ENCODE measurements at regions of chr6 and their contacts with region 1.

Region 1: DNA sequence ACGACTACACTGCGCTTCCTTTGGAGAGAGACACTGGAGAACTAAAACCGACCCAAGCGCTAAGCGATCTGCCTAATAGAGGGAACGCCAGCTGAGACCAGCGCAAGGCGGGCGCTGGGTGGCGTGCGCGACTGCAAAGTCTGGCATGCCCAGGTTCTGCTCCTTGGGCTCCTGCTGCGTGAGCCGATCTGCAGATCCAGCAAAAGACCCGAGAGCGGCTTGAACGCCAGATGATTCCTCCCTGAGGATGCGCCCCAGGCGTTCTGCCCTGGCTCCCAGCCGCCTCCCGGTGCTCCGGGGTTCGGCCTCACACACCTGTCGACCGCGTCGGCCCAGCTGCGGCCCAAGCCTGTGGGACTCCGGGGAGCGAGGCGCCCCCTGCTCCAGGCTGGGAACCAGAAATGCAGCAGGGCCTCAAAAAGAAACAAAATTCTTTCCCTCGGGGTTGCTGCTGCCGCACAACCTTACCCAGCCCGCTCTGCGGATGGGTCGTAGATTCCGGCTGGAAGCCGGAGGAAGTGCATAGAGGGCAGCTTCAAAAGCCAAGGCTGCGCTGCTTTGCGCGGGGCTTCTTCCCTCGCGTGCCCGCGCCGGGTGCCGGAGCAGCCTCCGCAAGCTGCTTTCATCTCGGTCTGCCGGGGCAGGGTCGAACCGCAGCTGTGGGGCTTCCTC is 17.9 kb upstream of the PRDM13 start:
- DNase-seq: peak; percentile 89
- H3K4me3 Mint-ChIP-seq: peak overlapping the region; percentile 88
- H3K27ac Mint-ChIP-seq: peak overlapping the region; percentile 45
- H3K4me1 Mint-ChIP-seq: peaks cover 25% of the 10 kb centered on the region
- H3K27me3 Mint-ChIP-seq: peaks cover 77% of the 10 kb centered on the region

Region 2: GRCh38 chr6:99467509-99468106 is 121.1 kb before region 1 on chr6:
- intact Hi-C with region 1: loop called (anchors 2 kb)
- DNase-seq: no peak
- H3K4me3 Mint-ChIP-seq: no peak overlapping the region
- H3K27ac Mint-ChIP-seq: no peak overlapping the region
- H3K4me1 Mint-ChIP-seq: no peaks in the 10 kb centered on the region
- H3K27me3 Mint-ChIP-seq: no peaks in the 10 kb centered on the region

Region 3: GRCh38 chr6:99603421-99604165 is 14.8 kb after region 1 on chr6:
- intact Hi-C with region 1: loop called (anchors 1 kb)
- DNase-seq: peak; percentile 71
- H3K4me3 Mint-ChIP-seq: peak overlapping the region; percentile 39
- H3K27ac Mint-ChIP-seq: peak overlapping the region; percentile 11
- H3K4me1 Mint-ChIP-seq: peaks cover 19% of the 10 kb centered on the region
- H3K27me3 Mint-ChIP-seq: peaks cover 87% of the 10 kb centered on the region

Region 4: GRCh38 chr6:99613409-99613704 is 24.6 kb after region 1 on chr6:
- intact Hi-C with region 1: loop called (anchors 2 kb)
- DNase-seq: peak; percentile 76
- H3K4me3 Mint-ChIP-seq: peak overlapping the region; percentile 55
- H3K27ac Mint-ChIP-seq: no peak overlapping the region
- H3K4me1 Mint-ChIP-seq: peaks cover 29% of the 10 kb centered on the region
- H3K27me3 Mint-ChIP-seq: peaks cover 75% of the 10 kb centered on the region

Region 5: GRCh38 chr6:99618649-99619408 is 30.1 kb after region 1 on chr6:
- intact Hi-C with region 1: loop called (anchors 5 kb)
- DNase-seq: no peak
- H3K4me3 Mint-ChIP-seq: no peak overlapping the region
- H3K27ac Mint-ChIP-seq: no peak overlapping the region
- H3K4me1 Mint-ChIP-seq: peaks cover 7% of the 10 kb centered on the region
- H3K27me3 Mint-ChIP-seq: peaks cover 78% of the 10 kb centered on the region

Region 6: DNA sequence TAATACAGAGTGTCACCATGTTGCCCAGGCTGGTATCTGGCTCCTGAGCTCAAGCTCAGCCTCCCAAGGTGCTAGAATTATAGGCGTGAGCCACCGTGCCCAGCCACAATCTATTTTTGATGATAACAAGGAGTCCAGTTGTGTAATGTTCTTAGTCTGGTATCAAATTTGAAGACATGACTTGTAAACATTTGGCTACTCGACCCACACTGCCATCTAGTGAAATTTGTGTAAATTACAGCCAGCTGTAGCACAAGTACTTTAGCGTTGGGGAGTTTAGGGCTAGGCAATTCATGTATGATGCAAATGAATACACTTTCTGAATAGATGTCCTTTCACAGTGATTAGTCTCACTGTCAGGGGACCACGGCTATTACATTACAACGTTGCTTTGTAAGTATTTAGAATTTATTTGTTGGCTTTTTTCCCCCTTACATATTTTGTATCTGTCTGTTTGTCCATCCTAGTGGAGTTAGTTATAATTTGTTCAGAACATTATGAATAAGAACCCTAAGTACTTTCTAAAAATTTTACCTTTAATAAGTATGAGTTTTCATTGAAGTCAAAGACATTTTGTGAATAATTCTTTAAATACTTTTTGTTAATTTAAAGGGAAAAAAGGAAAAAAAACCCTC is 157.6 kb after region 1 on chr6:
- intact Hi-C with region 1: loop called (anchors 1 kb)
- DNase-seq: peak; percentile 86
- H3K4me3 Mint-ChIP-seq: no peak overlapping the region
- H3K27ac Mint-ChIP-seq: no peak overlapping the region
- H3K4me1 Mint-ChIP-seq: no peaks in the 10 kb centered on the region
- H3K27me3 Mint-ChIP-seq: peaks cover 31% of the 10 kb centered on the region